HCT116 (cell line): ENCODE measurements at regions of chr12 and their contacts with region 1.

Region 1: GRCh38 chr12:120327593-120327992 is at the start of gene PLA2G1B:
- DNase-seq: no peak
- ATAC-seq: no peak
- H3K4me3 ChIP-seq: no peak within 1 kb of the TSS
- H3K27ac ChIP-seq: no peak within 1 kb of the TSS
- H3K4me1 ChIP-seq: peaks cover 0 to 8% of the 10 kb centered on the region in 2 experiments; a peak in 1 of 4 replicates
- H3K27me3 ChIP-seq: no peaks in the 10 kb centered on the region
- CTCF ChIP-seq: no peak
- POLR2A ChIP-seq: no peak
- RAD21 ChIP-seq: no peak
- total RNA-seq, gene PLA2G1B: 2.0 TPM

Region 2: GRCh38 chr12:120649442-120650232 is 322.0 kb after region 1 on chr12:
- CTCF ChIA-PET with region 1: interaction called, 3 read pairs
- POLR2A ChIA-PET with region 1: no interaction called
- RAD21 ChIA-PET with region 1: no interaction called
- intact Hi-C with region 1: loop called (anchors 2 kb)
- DNase-seq: no peak
- ATAC-seq: peak; percentile 6; the same call in 1 of the 2 replicates
- H3K4me3 ChIP-seq: peak overlapping the region in 1 of 2 experiments; percentile 59; a peak in 1 of 4 replicates
- H3K27ac ChIP-seq: no peak overlapping the region
- H3K4me1 ChIP-seq: peaks cover 5 to 32% of the 10 kb centered on the region in 2 experiments; a peak in 3 of 4 replicates
- H3K27me3 ChIP-seq: no peaks in the 10 kb centered on the region; the same call in 1 of the 2 replicates
- CTCF ChIP-seq: no peak
- POLR2A ChIP-seq: no peak
- RAD21 ChIP-seq: no peak

Region 3: GRCh38 chr12:120710031-120710804 is 382.6 kb after region 1 on chr12 and contains the start of gene UNC119B:
- CTCF ChIA-PET with region 1: no interaction called
- POLR2A ChIA-PET with region 1: no interaction called
- RAD21 ChIA-PET with region 1: no interaction called
- intact Hi-C with region 1: loop called (anchors 10 kb)
- DNase-seq: no peak
- ATAC-seq: peak; percentile 81
- H3K4me3 ChIP-seq: peak within 1 kb of the TSS; percentile 86 to 90
- H3K27ac ChIP-seq: peak within 1 kb of the TSS; percentile 90
- H3K4me1 ChIP-seq: peaks cover 11 to 15% of the 10 kb centered on the region in 2 experiments
- H3K27me3 ChIP-seq: no peaks in the 10 kb centered on the region
- CTCF ChIP-seq: no peak
- POLR2A ChIP-seq: no peak
- RAD21 ChIP-seq: no peak
- total RNA-seq, gene UNC119B: 33.8 TPM

Region 4: GRCh38 chr12:121095544-121096198 is 768.1 kb after region 1 on chr12:
- CTCF ChIA-PET with region 1: no interaction called
- POLR2A ChIA-PET with region 1: no interaction called
- RAD21 ChIA-PET with region 1: no interaction called
- intact Hi-C with region 1: loop called (anchors 2 kb)
- DNase-seq: peak; percentile 48
- ATAC-seq: peak; percentile 97
- H3K4me3 ChIP-seq: peak overlapping the region; percentile 36 to 52
- H3K27ac ChIP-seq: no peak overlapping the region
- H3K4me1 ChIP-seq: peaks cover 3 to 14% of the 10 kb centered on the region in 2 experiments; a peak in 3 of 4 replicates
- H3K27me3 ChIP-seq: no peaks in the 10 kb centered on the region
- CTCF ChIP-seq: peak; percentile 68 to 84 (median 70)
- POLR2A ChIP-seq: peak; percentile 23
- RAD21 ChIP-seq: peak; percentile 81